CD4-positive, alpha-beta T cell (primary cell): ENCODE measurements at regions of chr19 and their contacts with region 1.

Region 1: GRCh38 chr19:6110360-6110977 is at the start of gene RFX2:
- DNase-seq: peak; percentile 98 to 100 (median 99)
- ATAC-seq: peak; percentile 96
- H3K4me3 ChIP-seq: peak within 1 kb of the TSS; percentile 65
- H3K4me3 Mint-ChIP-seq: peak within 1 kb of the TSS; percentile 89
- H3K27ac ChIP-seq: peak within 1 kb of the TSS; percentile 21 to 52
- H3K27ac Mint-ChIP-seq: peak within 1 kb of the TSS; percentile 74
- H3K4me1 ChIP-seq: peaks cover 27% of the 10 kb centered on the region
- H3K4me1 Mint-ChIP-seq: peaks cover 25% of the 10 kb centered on the region
- H3K27me3 ChIP-seq: peaks cover 2 to 4% of the 10 kb centered on the region in 2 experiments
- H3K27me3 Mint-ChIP-seq: peaks cover 15% of the 10 kb centered on the region
- CTCF ChIP-seq: no peak
- total RNA-seq, gene RFX2: 4.8 to 5.5 TPM

Region 2: DNA sequence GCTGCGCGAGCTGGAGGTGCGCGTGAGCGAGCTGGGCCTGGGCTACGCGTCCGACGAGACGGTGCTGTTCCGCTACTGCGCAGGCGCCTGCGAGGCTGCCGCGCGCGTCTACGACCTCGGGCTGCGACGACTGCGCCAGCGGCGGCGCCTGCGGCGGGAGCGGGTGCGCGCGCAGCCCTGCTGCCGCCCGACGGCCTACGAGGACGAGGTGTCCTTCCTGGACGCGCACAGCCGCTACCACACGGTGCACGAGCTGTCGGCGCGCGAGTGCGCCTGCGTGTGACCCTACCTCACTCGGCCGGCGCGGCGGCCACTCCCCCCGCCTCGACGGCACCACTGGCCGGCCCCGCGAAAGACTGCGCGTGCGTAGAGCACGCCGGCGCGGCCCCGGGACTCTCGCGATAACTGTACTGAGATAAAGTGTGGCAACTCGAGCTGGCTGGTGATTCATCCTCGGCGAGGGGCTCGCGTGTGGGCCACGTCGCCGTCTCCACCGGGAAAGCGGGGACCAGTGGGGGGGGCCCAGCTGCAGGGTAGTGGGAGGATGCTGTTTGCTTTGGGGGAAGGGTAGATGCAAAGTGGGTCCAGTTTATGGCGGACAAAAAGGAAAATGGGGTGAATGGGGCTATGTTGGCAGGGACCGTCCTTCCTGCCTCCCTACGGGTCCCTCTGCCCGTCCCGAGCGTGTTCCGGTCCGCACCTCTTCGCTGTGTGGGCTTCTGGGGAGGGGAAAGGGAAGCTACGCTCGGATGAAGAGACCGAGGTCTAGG is 282.4 kb before region 1 on chr19:
- CTCF ChIA-PET with region 1: no interaction called
- POLR2A ChIA-PET with region 1: interaction called, 3 read pairs
- intact Hi-C with region 1: loop called in 1 of 2 experiments (anchors 5 kb)
- DNase-seq: peak; percentile 85 to 98 (median 92)
- ATAC-seq: peak; percentile 81
- H3K4me3 ChIP-seq: peak overlapping the region; percentile 86
- H3K4me3 Mint-ChIP-seq: peak overlapping the region; percentile 98
- H3K27ac ChIP-seq: peak overlapping the region; percentile 69 to 86
- H3K27ac Mint-ChIP-seq: peak overlapping the region; percentile 95
- H3K4me1 ChIP-seq: peaks cover 31% of the 10 kb centered on the region
- H3K4me1 Mint-ChIP-seq: peaks cover 18% of the 10 kb centered on the region
- H3K27me3 ChIP-seq: peaks cover 0 to 3% of the 10 kb centered on the region in 2 experiments
- H3K27me3 Mint-ChIP-seq: no peaks in the 10 kb centered on the region
- CTCF ChIP-seq: no peak

Region 3: GRCh38 chr19:5977785-5978605 is 132.5 kb before region 1 on chr19 and contains the start of gene RANBP3:
- CTCF ChIA-PET with region 1: no interaction called
- POLR2A ChIA-PET with region 1: no interaction called
- intact Hi-C with region 1: loop called in 1 of 2 experiments (anchors 5 kb)
- DNase-seq: peak; percentile 95 to 100 (median 99)
- ATAC-seq: peak; percentile 92
- H3K4me3 ChIP-seq: peak within 1 kb of the TSS; percentile 95
- H3K4me3 Mint-ChIP-seq: peak within 1 kb of the TSS; percentile 100
- H3K27ac ChIP-seq: peak within 1 kb of the TSS; percentile 78 to 85
- H3K27ac Mint-ChIP-seq: peak within 1 kb of the TSS; percentile 94
- H3K4me1 ChIP-seq: peaks cover 66% of the 10 kb centered on the region
- H3K4me1 Mint-ChIP-seq: peaks cover 52% of the 10 kb centered on the region
- H3K27me3 ChIP-seq: no peaks in the 10 kb centered on the region
- H3K27me3 Mint-ChIP-seq: no peaks in the 10 kb centered on the region
- CTCF ChIP-seq: no peak
- total RNA-seq, gene RANBP3: 82.7 to 88.7 TPM

Region 4: DNA sequence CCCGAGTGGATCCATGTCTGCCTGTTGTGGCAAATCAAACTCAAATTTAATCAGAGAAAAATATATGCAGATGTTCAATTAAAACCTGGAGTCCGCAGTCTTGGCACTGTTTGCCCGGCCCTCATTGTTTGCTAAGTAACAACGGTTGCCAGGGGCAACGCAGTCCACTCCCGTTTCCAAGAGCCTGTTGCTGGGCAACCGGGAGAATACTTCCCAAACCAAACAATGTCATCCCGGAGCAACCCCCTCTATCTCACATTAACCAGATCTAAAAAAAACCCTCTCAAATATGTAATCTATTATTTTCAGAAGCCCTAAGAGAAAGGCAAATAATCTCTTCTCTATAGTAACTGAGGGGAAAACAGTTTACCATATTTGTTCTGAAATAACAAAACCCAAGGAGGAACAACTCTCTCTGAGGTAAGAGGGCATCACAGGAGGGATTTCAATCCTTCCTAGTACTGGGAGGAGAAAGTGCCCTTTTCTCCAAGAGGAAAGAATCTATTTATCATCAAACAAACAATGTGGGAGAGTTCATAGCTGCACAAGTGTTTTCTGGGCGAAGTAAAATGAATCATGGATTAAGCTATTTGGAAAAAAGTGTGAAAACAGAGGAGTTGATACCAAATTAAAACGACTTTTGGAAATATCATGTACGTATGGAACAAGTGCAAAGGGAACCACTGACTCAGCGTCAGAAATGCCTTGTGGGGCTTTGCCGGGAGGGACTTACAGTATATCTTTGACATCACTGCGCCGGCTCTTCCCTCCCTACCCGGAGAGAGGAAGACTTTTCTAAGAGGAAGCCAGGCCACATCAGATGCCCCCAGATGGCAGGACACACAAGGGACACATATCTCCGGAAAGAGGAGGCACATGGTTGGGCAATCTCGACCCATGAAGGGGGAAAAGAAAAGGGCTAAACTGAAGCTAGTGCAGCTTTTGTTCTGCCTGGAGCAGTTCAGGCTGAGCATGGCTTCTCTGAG is 43.5 kb before region 1 on chr19:
- CTCF ChIA-PET with region 1: no interaction called
- POLR2A ChIA-PET with region 1: no interaction called
- intact Hi-C with region 1: loop called in 1 of 2 experiments (anchors 5 kb)
- DNase-seq: peak in 6 of 14 experiments; percentile 16 to 87 (median 38)
- ATAC-seq: no peak
- H3K4me3 ChIP-seq: no peak overlapping the region
- H3K4me3 Mint-ChIP-seq: no peak overlapping the region
- H3K27ac ChIP-seq: peak overlapping the region in 1 of 2 donors; percentile 69
- H3K27ac Mint-ChIP-seq: peak overlapping the region; percentile 51
- H3K4me1 ChIP-seq: peaks cover 38% of the 10 kb centered on the region
- H3K4me1 Mint-ChIP-seq: peaks cover 34% of the 10 kb centered on the region
- H3K27me3 ChIP-seq: no peaks in the 10 kb centered on the region
- H3K27me3 Mint-ChIP-seq: peaks cover 3% of the 10 kb centered on the region
- CTCF ChIP-seq: no peak

Region 5: DNA sequence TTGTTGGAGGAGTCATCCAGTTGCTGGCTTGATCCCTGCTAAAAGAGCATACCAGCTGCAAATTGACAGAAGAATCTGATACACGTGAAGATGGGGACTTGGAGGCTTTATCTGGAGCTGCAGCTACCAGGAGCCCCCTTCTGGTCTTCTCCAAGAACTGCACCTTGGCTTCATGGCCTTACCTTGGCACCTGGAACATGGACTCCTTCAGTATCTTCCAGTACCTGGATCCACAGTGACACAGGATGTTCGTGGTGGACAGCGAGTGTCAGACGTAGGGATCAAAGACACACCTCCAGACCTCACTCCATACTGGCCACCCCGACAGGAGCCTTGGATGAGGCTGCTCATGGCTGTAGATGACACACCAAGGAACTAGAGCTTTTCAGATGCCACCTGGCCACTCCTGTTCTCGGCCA is 15.1 kb after region 1 on chr19:
- CTCF ChIA-PET with region 1: interaction called, 14 read pairs
- POLR2A ChIA-PET with region 1: no interaction called
- intact Hi-C with region 1: no loop called
- DNase-seq: peak; percentile 49 to 88 (median 57)
- ATAC-seq: peak; percentile 94
- H3K4me3 ChIP-seq: no peak overlapping the region
- H3K4me3 Mint-ChIP-seq: no peak overlapping the region
- H3K27ac ChIP-seq: no peak overlapping the region
- H3K27ac Mint-ChIP-seq: no peak overlapping the region
- H3K4me1 ChIP-seq: peaks cover 3% of the 10 kb centered on the region
- H3K4me1 Mint-ChIP-seq: peaks cover 4% of the 10 kb centered on the region
- H3K27me3 ChIP-seq: no peaks in the 10 kb centered on the region
- H3K27me3 Mint-ChIP-seq: no peaks in the 10 kb centered on the region
- CTCF ChIP-seq: peak; percentile 85

Region 6: GRCh38 chr19:6199240-6199983 is 88.9 kb after region 1 on chr19:
- CTCF ChIA-PET with region 1: no interaction called
- POLR2A ChIA-PET with region 1: no interaction called
- intact Hi-C with region 1: loop called in 1 of 2 experiments (anchors 5 kb)
- DNase-seq: peak; percentile 98 to 100 (median 100)
- ATAC-seq: peak; percentile 90
- H3K4me3 ChIP-seq: peak overlapping the region; percentile 86
- H3K4me3 Mint-ChIP-seq: peak overlapping the region; percentile 92
- H3K27ac ChIP-seq: no peak overlapping the region
- H3K27ac Mint-ChIP-seq: peak overlapping the region; percentile 79
- H3K4me1 ChIP-seq: peaks cover 18% of the 10 kb centered on the region
- H3K4me1 Mint-ChIP-seq: peaks cover 10% of the 10 kb centered on the region
- H3K27me3 ChIP-seq: no peaks in the 10 kb centered on the region
- H3K27me3 Mint-ChIP-seq: no peaks in the 10 kb centered on the region
- CTCF ChIP-seq: peak; percentile 1